GM12878 (cell line): ENCODE measurements at regions of chr4 and their contacts with region 1.

Region 1: GRCh38 chr4:151117371-151117962 is 18.0 kb downstream of the RPS3A start:
- DNase-seq: no peak
- ATAC-seq: peak; percentile 90
- H3K4me3 ChIP-seq: no peak overlapping the region
- H3K27ac ChIP-seq: no peak overlapping the region
- H3K4me1 ChIP-seq: no peaks in the 10 kb centered on the region
- H3K27me3 ChIP-seq: no peaks in the 10 kb centered on the region
- CTCF ChIP-seq: peak; percentile 69 to 84 (median 83)
- EP300 ChIP-seq: no peak
- POLR2A ChIP-seq: no peak
- RAD21 ChIP-seq: peak; percentile 76

Region 2: DNA sequence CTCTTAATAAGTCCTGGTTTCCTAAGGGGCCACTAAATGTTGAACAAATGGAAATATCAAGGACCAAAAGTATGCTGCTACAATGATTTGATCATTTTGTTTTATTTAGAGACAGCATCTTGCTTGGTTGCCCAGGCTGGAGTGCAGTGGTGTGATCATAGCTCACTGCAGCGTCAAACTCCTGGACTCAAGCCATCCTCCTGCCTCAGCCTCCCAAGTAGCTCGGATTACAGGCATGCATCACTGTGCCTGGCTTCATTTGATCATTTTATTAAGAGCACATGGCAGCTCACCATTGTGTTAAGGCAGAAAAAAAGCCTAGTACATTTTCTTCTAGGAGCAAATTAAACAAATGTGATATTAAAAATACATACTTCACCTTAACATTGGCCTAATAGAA is 986.5 kb before region 1 on chr4:
- CTCF ChIA-PET with region 1: no interaction called
- POLR2A ChIA-PET with region 1: no interaction called
- RAD21 ChIA-PET with region 1: no interaction called
- SMC1A ChIA-PET with region 1: no interaction called
- in situ Hi-C with region 1: no loop called
- intact Hi-C with region 1: no loop called
- DNase-seq: no peak
- ATAC-seq: no peak
- H3K4me3 ChIP-seq: no peak overlapping the region
- H3K27ac ChIP-seq: no peak overlapping the region
- H3K4me1 ChIP-seq: peaks cover 4% of the 10 kb centered on the region; the same call in 1 of the 2 replicates
- H3K27me3 ChIP-seq: no peaks in the 10 kb centered on the region; a peak in 2 of 4 replicates
- CTCF ChIP-seq: no peak
- EP300 ChIP-seq: no peak
- POLR2A ChIP-seq: no peak
- RAD21 ChIP-seq: no peak

Region 3: DNA sequence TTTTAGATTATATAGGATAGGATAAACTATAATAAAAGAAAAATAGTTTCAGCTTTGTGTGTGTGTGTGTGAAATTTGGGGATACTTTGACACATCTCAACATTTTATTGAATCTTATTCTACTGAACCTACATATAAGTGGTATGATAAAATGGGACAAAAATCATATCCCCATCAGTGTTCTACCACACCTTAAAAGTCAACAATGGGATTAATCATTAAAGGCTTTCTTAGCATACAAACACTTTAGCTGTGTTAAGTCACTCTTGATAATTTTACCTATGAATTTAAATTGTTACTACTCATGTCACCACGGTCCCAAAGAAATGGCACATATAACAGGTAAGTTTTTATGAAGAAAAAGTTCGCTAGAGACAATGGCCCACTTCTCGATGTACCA is 64.7 kb before region 1 on chr4:
- CTCF ChIA-PET with region 1: no interaction called
- POLR2A ChIA-PET with region 1: no interaction called
- RAD21 ChIA-PET with region 1: no interaction called
- SMC1A ChIA-PET with region 1: no interaction called
- in situ Hi-C with region 1: no loop called
- intact Hi-C with region 1: no loop called
- DNase-seq: no peak
- ATAC-seq: peak; percentile 7
- H3K4me3 ChIP-seq: no peak overlapping the region
- H3K27ac ChIP-seq: peak overlapping the region; percentile 38
- H3K4me1 ChIP-seq: peaks cover 14% of the 10 kb centered on the region
- H3K27me3 ChIP-seq: no peaks in the 10 kb centered on the region
- CTCF ChIP-seq: no peak
- EP300 ChIP-seq: no peak
- POLR2A ChIP-seq: no peak
- RAD21 ChIP-seq: no peak

Region 4: GRCh38 chr4:151099229-151099975 is 18.1 kb before region 1 on chr4 and contains the start of gene RPS3A:
- CTCF ChIA-PET with region 1: interaction called, 13 read pairs
- POLR2A ChIA-PET with region 1: interaction called, 4 read pairs
- RAD21 ChIA-PET with region 1: interaction called, 7 read pairs
- SMC1A ChIA-PET with region 1: interaction called, 7 read pairs
- in situ Hi-C with region 1: no loop called
- intact Hi-C with region 1: no loop called
- DNase-seq: peak; percentile 97
- ATAC-seq: peak; percentile 89
- H3K4me3 ChIP-seq: peak within 1 kb of the TSS; percentile 98
- H3K27ac ChIP-seq: peak within 1 kb of the TSS; percentile 78
- H3K4me1 ChIP-seq: peaks cover 23% of the 10 kb centered on the region
- H3K27me3 ChIP-seq: no peaks in the 10 kb centered on the region
- CTCF ChIP-seq: peak; percentile 75 to 90 (median 83)
- EP300 ChIP-seq: peak; percentile 89 to 91
- POLR2A ChIP-seq: peak; percentile 100
- RAD21 ChIP-seq: peak; percentile 35
- polyA plus RNA-seq, gene RPS3A: 5,081 to 5,756 TPM

Region 5: DNA sequence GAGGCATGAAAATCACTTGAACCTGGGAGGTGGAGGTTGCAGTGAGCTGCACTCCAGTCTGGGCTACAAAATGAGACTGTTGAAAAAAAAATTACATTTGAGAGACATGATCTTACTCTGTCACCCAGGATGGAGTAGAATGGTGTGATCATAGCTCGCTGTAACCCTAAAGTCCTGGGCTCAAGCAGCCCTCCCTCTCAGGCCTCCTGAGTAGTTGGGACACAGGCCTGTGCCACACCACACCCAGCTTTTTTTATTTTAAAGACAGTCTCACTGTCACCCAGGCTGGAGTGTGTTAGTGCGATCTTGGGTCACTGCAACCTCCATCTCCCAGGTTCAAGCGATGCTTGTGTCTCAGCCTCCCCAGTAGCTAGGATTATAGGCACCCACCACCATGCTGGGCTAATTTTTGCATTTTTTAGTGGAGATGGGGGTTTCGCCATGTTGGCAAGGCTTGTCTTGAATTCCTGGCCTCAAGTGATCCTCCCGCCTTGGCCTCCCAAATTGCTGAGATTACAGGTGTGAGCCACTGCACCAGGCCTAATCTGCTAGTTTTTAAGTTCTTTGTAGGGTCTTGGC is 11.9 kb before region 1 on chr4:
- CTCF ChIA-PET with region 1: interaction called, 13 read pairs
- POLR2A ChIA-PET with region 1: interaction called, 4 read pairs
- RAD21 ChIA-PET with region 1: interaction called, 7 read pairs
- SMC1A ChIA-PET with region 1: interaction called, 7 read pairs
- in situ Hi-C with region 1: no loop called
- intact Hi-C with region 1: no loop called
- DNase-seq: no peak
- ATAC-seq: peak; percentile 22
- H3K4me3 ChIP-seq: no peak overlapping the region
- H3K27ac ChIP-seq: no peak overlapping the region
- H3K4me1 ChIP-seq: no peaks in the 10 kb centered on the region
- H3K27me3 ChIP-seq: no peaks in the 10 kb centered on the region
- CTCF ChIP-seq: no peak
- EP300 ChIP-seq: no peak
- POLR2A ChIP-seq: 0 out of 2 replicates have a peak, but pooled peaks have one; percentile 25
- RAD21 ChIP-seq: no peak

Region 6: GRCh38 chr4:151163855-151164254 is 46.4 kb after region 1 on chr4:
- CTCF ChIA-PET with region 1: no interaction called
- POLR2A ChIA-PET with region 1: no interaction called
- RAD21 ChIA-PET with region 1: no interaction called
- SMC1A ChIA-PET with region 1: no interaction called
- in situ Hi-C with region 1: no loop called
- intact Hi-C with region 1: no loop called
- DNase-seq: no peak
- ATAC-seq: no peak
- H3K4me3 ChIP-seq: no peak overlapping the region
- H3K27ac ChIP-seq: no peak overlapping the region
- H3K4me1 ChIP-seq: no peaks in the 10 kb centered on the region
- H3K27me3 ChIP-seq: no peaks in the 10 kb centered on the region
- CTCF ChIP-seq: no peak
- EP300 ChIP-seq: no peak
- POLR2A ChIP-seq: no peak
- RAD21 ChIP-seq: no peak

Region 7: GRCh38 chr4:151362404-151363164 is 245.1 kb after region 1 on chr4:
- CTCF ChIA-PET with region 1: interaction called, 8 read pairs
- POLR2A ChIA-PET with region 1: no interaction called
- RAD21 ChIA-PET with region 1: interaction called, 3 read pairs
- SMC1A ChIA-PET with region 1: no interaction called
- in situ Hi-C with region 1: no loop called
- intact Hi-C with region 1: loop called (anchors 1 kb)
- DNase-seq: peak; percentile 27
- ATAC-seq: peak; percentile 100
- H3K4me3 ChIP-seq: no peak overlapping the region
- H3K27ac ChIP-seq: no peak overlapping the region
- H3K4me1 ChIP-seq: no peaks in the 10 kb centered on the region
- H3K27me3 ChIP-seq: no peaks in the 10 kb centered on the region
- CTCF ChIP-seq: peak; percentile 98; a peak in 5 of 6 replicates
- EP300 ChIP-seq: no peak
- POLR2A ChIP-seq: no peak
- RAD21 ChIP-seq: peak; percentile 97

Region 8: DNA sequence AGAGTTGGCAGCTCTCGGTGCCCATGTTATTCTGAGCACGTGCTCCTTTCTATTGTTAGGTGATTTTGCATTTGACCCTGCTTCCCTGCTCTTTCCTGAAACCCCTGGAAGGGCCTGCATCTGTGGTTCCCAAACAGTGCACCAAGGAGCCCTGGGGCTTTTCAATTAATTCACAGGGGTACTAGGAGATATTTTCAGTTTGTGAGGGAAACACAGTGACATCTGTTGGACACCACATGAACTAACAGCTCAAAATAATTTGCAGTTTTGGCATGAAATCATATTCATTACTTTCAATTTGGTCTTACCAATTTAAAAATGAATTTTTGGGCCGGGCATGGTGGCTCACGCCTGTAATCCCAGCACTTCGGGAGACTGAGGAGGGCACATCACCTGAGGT is 486.8 kb after region 1 on chr4:
- CTCF ChIA-PET with region 1: interaction called, 17 read pairs
- POLR2A ChIA-PET with region 1: no interaction called
- RAD21 ChIA-PET with region 1: interaction called, 4 read pairs
- SMC1A ChIA-PET with region 1: interaction called, 6 read pairs
- in situ Hi-C with region 1: no loop called
- intact Hi-C with region 1: no loop called
- DNase-seq: no peak
- ATAC-seq: peak; percentile 67
- H3K4me3 ChIP-seq: no peak overlapping the region
- H3K27ac ChIP-seq: no peak overlapping the region
- H3K4me1 ChIP-seq: no peaks in the 10 kb centered on the region
- H3K27me3 ChIP-seq: peaks cover 0 to 1% of the 10 kb centered on the region in 2 experiments; a peak in 3 of 4 replicates
- CTCF ChIP-seq: peak; percentile 26 to 42 (median 34); a peak in 4 of 6 replicates
- EP300 ChIP-seq: no peak
- POLR2A ChIP-seq: no peak
- RAD21 ChIP-seq: peak; percentile 45; the same call in 1 of the 2 replicates

Region 9: DNA sequence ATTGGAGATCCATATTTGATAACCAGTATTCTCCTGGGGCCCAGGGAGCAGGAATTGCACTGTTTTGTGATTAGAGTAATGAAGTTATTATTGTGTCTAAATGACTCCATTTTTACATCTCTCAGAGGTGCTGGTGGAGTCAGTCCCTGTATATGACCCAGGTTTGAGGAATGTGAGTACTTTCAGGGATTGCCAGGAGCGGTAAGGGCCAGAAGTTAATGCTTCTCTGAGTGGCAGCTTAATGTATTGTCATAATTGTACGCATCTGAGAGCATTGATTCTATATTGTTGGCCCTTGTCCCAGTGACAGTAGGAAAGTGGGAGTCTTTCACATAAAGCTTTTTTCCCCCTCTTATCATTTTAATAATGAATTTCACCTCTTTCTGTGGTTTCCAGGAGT is 497.1 kb after region 1 on chr4:
- CTCF ChIA-PET with region 1: no interaction called
- POLR2A ChIA-PET with region 1: no interaction called
- RAD21 ChIA-PET with region 1: interaction called, 6 read pairs
- SMC1A ChIA-PET with region 1: no interaction called
- in situ Hi-C with region 1: loop called (anchors 10 kb)
- intact Hi-C with region 1: loop called (anchors 5 kb)
- DNase-seq: no peak
- ATAC-seq: no peak
- H3K4me3 ChIP-seq: no peak overlapping the region
- H3K27ac ChIP-seq: no peak overlapping the region
- H3K4me1 ChIP-seq: no peaks in the 10 kb centered on the region
- H3K27me3 ChIP-seq: no peaks in the 10 kb centered on the region
- CTCF ChIP-seq: no peak
- EP300 ChIP-seq: no peak
- POLR2A ChIP-seq: no peak
- RAD21 ChIP-seq: no peak

Region 10: DNA sequence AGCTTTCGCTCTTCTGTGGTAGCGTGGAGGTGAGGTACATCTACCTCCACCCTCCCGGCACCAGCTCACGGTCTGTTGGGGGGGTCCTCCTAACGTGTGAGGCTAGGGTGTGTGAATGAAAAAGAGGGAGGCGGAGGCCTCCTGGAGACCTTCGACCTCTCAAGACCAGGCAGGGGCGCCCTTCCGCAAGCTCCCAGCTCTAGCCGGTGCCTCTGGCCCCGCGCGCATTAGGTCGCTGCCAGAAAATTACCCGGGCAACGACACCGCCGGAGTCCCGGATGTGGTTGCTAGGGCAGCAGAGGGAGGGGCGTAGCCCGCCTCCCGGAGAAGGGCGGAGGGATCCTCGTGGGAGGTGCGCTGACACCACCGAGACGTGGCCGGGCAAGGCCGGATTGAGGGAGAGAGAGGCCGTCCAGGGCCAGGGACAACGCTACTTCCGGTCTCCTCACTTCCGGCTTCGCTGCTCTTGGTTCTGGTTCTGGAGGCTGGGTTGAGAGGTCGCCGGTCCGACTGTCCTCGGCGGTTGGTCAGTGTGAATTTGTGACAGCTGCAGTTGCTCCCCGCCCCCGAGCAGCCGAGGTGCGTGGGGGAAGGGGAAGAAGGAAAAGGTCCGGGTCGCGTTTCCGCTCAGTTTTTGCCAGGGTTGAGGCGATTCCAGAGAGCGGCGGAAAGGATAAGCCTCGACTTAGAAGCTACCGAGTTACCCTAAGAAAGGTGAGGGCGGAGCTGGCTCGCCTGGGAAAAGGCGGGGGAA is 1662.2 kb after region 1 on chr4 and contains the starts of genes ARFIP1 and TIGD4:
- CTCF ChIA-PET with region 1: no interaction called
- POLR2A ChIA-PET with region 1: no interaction called
- RAD21 ChIA-PET with region 1: no interaction called
- SMC1A ChIA-PET with region 1: no interaction called
- in situ Hi-C with region 1: loop called (anchors 25 kb)
- intact Hi-C with region 1: no loop called
- DNase-seq: peak; percentile 90
- ATAC-seq: peak; percentile 93
- H3K4me3 ChIP-seq: peak within 1 kb of the TSS; percentile 91
- H3K27ac ChIP-seq: peak within 1 kb of the TSS; percentile 87
- H3K4me1 ChIP-seq: peaks cover 5% of the 10 kb centered on the region
- H3K27me3 ChIP-seq: no peaks in the 10 kb centered on the region
- CTCF ChIP-seq: peak; percentile 23 to 50 (median 35); a peak in 5 of 6 replicates
- EP300 ChIP-seq: no peak
- POLR2A ChIP-seq: peak; percentile 84
- RAD21 ChIP-seq: peak; percentile 35; the same call in 1 of the 2 replicates
- polyA plus RNA-seq, gene ARFIP1: 9.5 to 11.0 TPM
- polyA plus RNA-seq, gene TIGD4: 0.24 to 0.31 TPM